ENCODE measurements at regions of chr1 and their contacts with region 1.

Region 1: GRCh38 chr1:24635195-24635843 is 7.8 kb upstream of the SRRM1 start:
- DNase-seq: no peak
- H3K4me3 Mint-ChIP-seq: no peak overlapping the region
- H3K27ac Mint-ChIP-seq: no peak overlapping the region
- H3K4me1 Mint-ChIP-seq: no peaks in the 10 kb centered on the region
- H3K27me3 Mint-ChIP-seq: peaks cover 15% of the 10 kb centered on the region

Region 2: DNA sequence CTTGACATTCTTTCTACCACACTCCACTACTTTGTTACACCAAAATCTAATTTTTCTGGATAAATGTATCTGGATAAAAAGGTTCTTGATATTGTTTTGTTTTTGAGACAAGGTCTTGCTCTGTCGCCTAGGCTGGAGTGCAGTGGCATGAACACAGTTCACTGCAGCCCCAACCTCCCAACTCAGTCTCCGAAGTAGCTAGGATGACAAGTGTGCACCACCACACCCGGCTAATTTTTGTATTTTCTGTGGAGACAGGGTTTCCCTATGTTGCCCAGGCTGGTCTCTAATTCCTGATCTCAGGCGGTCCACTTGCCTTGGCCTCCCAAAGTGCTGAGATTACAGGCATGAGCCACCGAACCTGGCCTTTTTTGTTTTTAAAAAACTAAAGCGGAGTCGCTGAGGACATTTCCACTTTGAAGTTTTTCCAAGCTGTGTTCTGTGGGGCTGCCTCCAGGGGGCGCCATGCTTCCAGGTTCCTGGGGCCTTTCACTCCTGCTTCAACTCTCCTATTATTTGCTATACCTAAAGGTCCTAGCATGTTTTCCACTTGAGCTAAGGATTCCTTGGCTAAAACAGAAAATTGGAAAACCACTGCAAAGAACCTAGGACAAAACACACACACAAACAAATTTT is 93.5 kb before region 1 on chr1:
- intact Hi-C with region 1: loop called (anchors 1 kb)
- DNase-seq: no peak
- H3K4me3 Mint-ChIP-seq: no peak overlapping the region
- H3K27ac Mint-ChIP-seq: no peak overlapping the region
- H3K4me1 Mint-ChIP-seq: peaks cover 37% of the 10 kb centered on the region
- H3K27me3 Mint-ChIP-seq: peaks cover 7% of the 10 kb centered on the region

Region 3: GRCh38 chr1:24586970-24587820 is 48.1 kb before region 1 on chr1:
- intact Hi-C with region 1: loop called (anchors 2 kb)
- DNase-seq: peak; percentile 53
- H3K4me3 Mint-ChIP-seq: no peak overlapping the region
- H3K27ac Mint-ChIP-seq: no peak overlapping the region
- H3K4me1 Mint-ChIP-seq: peaks cover 9% of the 10 kb centered on the region
- H3K27me3 Mint-ChIP-seq: peaks cover 17% of the 10 kb centered on the region

Region 4: GRCh38 chr1:24594154-24594553 is 41.2 kb before region 1 on chr1:
- intact Hi-C with region 1: loop called (anchors 1 kb)
- DNase-seq: no peak
- H3K4me3 Mint-ChIP-seq: no peak overlapping the region
- H3K27ac Mint-ChIP-seq: no peak overlapping the region
- H3K4me1 Mint-ChIP-seq: no peaks in the 10 kb centered on the region
- H3K27me3 Mint-ChIP-seq: peaks cover 8% of the 10 kb centered on the region

Measured in activated T-helper 1 cell treated with anti-CD3 and anti-CD28 coated beads, Interleukin-12 subunit alpha, Interleukin-12 subunit beta, Interleukin-2, Interleukin-4 antibody, amounts not matched to agents 30 ng/mL and 10 ng/mL and 1 ng/mL, durations not matched to agents 14 hours and 24 hours and 36 hours (primary cell).